Dendritic cell treated with granulocyte-macrophage colony-stimulating factor and Interleukin-4, amounts not matched to agents 40 ng/mL and 50 ng/mL, for 4 days (primary cell): ENCODE measurements at regions of chr17 and their contacts with region 1.

Region 1: GRCh38 chr17:76868176-76868668 is at the start of gene MGAT5B:
- H3K4me3 Mint-ChIP-seq: peak within 1 kb of the TSS; percentile 18
- H3K27ac Mint-ChIP-seq: no peak within 1 kb of the TSS
- H3K4me1 Mint-ChIP-seq: peaks cover 15% of the 10 kb centered on the region
- H3K27me3 Mint-ChIP-seq: peaks cover 60% of the 10 kb centered on the region

Region 2: DNA sequence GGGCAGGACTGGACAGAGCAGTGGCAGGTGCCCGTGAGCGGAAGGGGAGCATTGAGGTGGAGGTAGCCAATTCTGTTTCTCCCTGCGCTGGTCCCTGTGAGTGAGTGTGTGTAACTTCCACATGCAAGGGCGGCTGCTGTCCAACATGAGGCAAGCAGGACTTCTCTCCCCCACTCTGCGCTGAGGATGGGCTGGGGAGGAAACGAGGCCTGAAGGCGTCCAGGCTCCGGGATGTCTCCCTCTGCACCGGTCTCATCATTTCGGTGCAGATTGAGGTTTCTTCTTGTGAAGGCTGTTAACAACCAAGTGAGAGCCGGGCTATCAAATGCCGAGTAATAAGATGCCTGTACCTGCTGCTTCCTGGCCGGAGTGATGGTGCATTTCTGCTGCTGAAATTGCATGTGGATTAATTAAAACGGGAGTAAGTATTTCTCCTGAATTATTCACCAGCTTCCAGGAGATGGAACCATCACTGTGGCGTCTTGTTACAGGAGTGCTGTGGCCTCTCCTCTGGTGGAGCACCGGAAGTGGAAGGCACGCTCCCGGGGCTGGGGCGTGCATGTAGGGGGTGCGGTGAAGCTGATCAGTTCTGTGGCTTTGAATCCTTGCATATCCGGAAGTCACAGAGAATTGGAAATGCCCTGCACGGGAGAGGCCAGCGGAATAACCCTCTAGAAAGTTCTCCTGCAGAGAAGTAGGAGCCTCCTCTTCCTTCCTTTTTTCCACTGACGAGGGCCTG is 41.7 kb before region 1 on chr17:
- intact Hi-C with region 1: no loop called
- H3K4me3 Mint-ChIP-seq: no peak overlapping the region
- H3K27ac Mint-ChIP-seq: no peak overlapping the region
- H3K4me1 Mint-ChIP-seq: no peaks in the 10 kb centered on the region
- H3K27me3 Mint-ChIP-seq: peaks cover 7% of the 10 kb centered on the region

Region 3: GRCh38 chr17:76901542-76902197 is 33.4 kb after region 1 on chr17:
- intact Hi-C with region 1: no loop called
- H3K4me3 Mint-ChIP-seq: no peak overlapping the region
- H3K27ac Mint-ChIP-seq: no peak overlapping the region
- H3K4me1 Mint-ChIP-seq: no peaks in the 10 kb centered on the region
- H3K27me3 Mint-ChIP-seq: peaks cover 1% of the 10 kb centered on the region

Region 4: DNA sequence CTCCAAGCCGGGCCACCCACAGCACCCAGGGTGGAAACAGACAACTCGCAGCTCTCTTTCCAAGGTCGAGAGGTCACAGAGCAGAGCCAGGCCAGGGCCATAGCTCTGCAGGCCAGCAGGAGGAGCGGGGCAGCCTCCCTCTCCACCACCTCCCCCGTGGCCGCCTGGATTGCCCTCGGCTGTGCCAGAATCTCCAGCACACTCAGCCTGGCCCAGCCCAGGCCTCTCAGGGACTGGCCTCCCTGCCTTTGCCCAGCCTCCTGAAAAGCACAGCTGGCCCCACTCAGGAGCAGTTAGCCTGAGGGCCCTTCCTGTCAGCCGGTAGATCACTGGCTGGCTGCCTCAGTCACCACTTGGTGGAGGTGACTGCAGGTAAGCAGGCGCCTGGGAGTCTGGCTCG is 186.7 kb after region 1 on chr17:
- intact Hi-C with region 1: loop called (anchors 5 kb)
- H3K4me3 Mint-ChIP-seq: no peak overlapping the region
- H3K27ac Mint-ChIP-seq: no peak overlapping the region
- H3K4me1 Mint-ChIP-seq: no peaks in the 10 kb centered on the region
- H3K27me3 Mint-ChIP-seq: peaks cover 15% of the 10 kb centered on the region

Region 5: GRCh38 chr17:77254951-77255825 is 387.0 kb after region 1 on chr17:
- intact Hi-C with region 1: no loop called
- H3K4me3 Mint-ChIP-seq: no peak overlapping the region
- H3K27ac Mint-ChIP-seq: no peak overlapping the region
- H3K4me1 Mint-ChIP-seq: peaks cover 22% of the 10 kb centered on the region
- H3K27me3 Mint-ChIP-seq: peaks cover 37% of the 10 kb centered on the region